ENCODE measurements at regions of chr21 and their contacts with region 1.

Region 1: GRCh38 chr21:21921421-21922232 is 923.4 kb downstream of the NCAM2 start:
- DNase-seq: peak; percentile 5
- H3K4me3 ChIP-seq: no peak overlapping the region
- H3K27ac ChIP-seq: no peak overlapping the region
- H3K4me1 ChIP-seq: no peaks in the 10 kb centered on the region
- CTCF ChIP-seq: peak; percentile 72

Region 2: GRCh38 chr21:20999659-21000058 is 922.0 kb before region 1 on chr21:
- CTCF ChIA-PET with region 1: no interaction called
- POLR2A ChIA-PET with region 1: no interaction called
- intact Hi-C with region 1: loop called (anchors 10 kb)
- DNase-seq: peak; percentile 15
- H3K4me3 ChIP-seq: no peak overlapping the region
- H3K27ac ChIP-seq: no peak overlapping the region
- H3K4me1 ChIP-seq: no peaks in the 10 kb centered on the region
- CTCF ChIP-seq: peak; percentile 84